Naive thymus-derived CD4-positive, alpha-beta T cell (primary cell): ENCODE measurements at regions of chr15 and their contacts with region 1.

Region 1: DNA sequence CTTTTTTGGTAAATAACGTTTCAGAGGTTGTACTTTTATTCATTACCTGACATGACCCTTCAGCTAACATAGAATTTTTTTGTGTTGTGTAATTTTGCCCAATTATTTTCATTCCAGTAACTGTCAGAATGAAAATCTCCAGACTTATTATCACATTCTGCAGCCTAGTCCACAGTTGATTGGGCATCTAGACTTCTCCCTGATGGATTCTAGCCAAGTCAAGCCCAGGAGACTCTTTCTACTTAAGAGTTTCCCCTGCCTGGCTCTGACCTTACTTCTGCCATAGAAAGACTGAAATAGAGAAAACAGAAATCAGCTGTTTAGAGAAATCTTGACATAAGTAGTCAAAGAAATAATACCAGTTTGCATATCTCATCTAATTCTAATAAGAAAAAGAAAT is 82.9 kb upstream of the CDAN1 start:
- DNase-seq: no peak
- ATAC-seq: no peak
- H3K4me3 ChIP-seq: no peak overlapping the region
- H3K4me3 Mint-ChIP-seq: no peak overlapping the region
- H3K27ac ChIP-seq: no peak overlapping the region
- H3K27ac Mint-ChIP-seq: no peak overlapping the region
- H3K4me1 ChIP-seq: no peaks in the 10 kb centered on the region
- H3K4me1 Mint-ChIP-seq: no peaks in the 10 kb centered on the region
- H3K27me3 ChIP-seq: no peaks in the 10 kb centered on the region
- H3K27me3 Mint-ChIP-seq: no peaks in the 10 kb centered on the region

Region 2: DNA sequence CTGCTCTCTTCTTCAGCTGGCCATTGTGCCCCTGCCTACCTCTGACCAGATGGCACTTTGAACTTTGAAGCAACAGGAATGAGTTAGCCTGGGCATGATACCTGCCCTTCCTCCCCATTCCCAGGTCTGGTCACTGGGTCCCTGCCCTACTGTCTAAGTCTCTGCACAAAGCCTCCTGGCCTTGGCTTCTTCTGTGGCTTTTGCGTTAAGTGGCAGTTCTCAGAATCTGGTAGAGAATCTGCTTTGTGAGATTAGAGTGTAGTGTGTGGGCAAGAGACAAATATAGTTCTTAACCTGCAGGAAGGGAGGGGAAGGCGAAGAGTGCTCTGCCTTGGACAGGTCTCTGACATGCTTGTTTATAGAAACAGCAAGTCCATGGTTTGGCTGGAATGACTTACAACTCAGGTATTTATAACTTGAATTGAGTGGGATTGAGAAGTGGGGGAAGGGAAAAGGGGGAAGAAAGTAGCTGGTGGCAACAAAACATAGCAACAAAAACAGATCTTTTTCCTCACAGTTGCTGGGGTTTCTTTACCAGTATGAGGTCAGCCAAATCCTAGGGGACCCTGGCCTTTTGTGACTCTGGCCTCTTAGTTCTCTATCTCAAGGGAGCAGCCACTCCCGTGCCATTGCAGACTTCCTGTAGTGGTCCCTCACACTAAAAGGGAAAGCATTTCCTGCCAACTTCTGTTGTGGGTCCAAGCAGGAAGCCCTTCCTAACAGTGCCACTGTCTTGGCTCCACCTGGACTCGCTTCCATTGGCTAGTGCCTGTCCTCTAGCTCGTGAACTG is 1028.8 kb before region 1 on chr15:
- CTCF ChIA-PET with region 1: no interaction called
- POLR2A ChIA-PET with region 1: no interaction called
- intact Hi-C with region 1: no loop called
- DNase-seq: no peak
- ATAC-seq: no peak
- H3K4me3 ChIP-seq: no peak overlapping the region
- H3K4me3 Mint-ChIP-seq: peak overlapping the region; percentile 2 to 70 (median 46)
- H3K27ac ChIP-seq: no peak overlapping the region
- H3K27ac Mint-ChIP-seq: peak overlapping the region in 7 of 9 donors; percentile 1 to 90 (median 53)
- H3K4me1 ChIP-seq: peaks cover 8 to 10% of the 10 kb centered on the region in 2 donors
- H3K4me1 Mint-ChIP-seq: peaks cover 50 to 72% (median 57%) of the 10 kb centered on the region in 7 donors
- H3K27me3 ChIP-seq: no peaks in the 10 kb centered on the region
- H3K27me3 Mint-ChIP-seq: no peaks in the 10 kb centered on the region

Region 3: DNA sequence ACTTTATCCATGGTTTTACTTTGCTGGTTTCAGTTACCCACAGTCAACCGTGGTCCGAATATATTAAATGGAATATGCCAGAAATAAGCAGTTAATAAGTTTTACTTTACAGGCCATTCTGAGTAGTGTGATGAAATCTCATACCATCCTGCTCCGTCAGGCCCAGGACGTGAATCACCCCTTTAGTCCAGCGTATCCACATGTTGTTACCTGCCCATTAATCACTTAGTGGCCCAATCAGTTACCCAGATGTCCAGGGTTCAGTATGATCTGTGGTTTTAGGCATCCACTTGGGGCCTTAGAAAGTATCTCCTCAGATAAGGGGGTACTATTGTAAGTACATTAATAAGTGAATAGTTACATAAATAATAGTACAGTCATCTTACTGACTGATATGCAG is 12.8 kb after region 1 on chr15:
- CTCF ChIA-PET with region 1: no interaction called
- POLR2A ChIA-PET with region 1: no interaction called
- intact Hi-C with region 1: loop called in 1 of 2 experiments (anchors 1 kb)
- DNase-seq: no peak
- ATAC-seq: no peak
- H3K4me3 ChIP-seq: no peak overlapping the region
- H3K4me3 Mint-ChIP-seq: no peak overlapping the region
- H3K27ac ChIP-seq: no peak overlapping the region
- H3K27ac Mint-ChIP-seq: no peak overlapping the region
- H3K4me1 ChIP-seq: no peaks in the 10 kb centered on the region
- H3K4me1 Mint-ChIP-seq: no peaks in the 10 kb centered on the region
- H3K27me3 ChIP-seq: no peaks in the 10 kb centered on the region
- H3K27me3 Mint-ChIP-seq: no peaks in the 10 kb centered on the region

Region 4: DNA sequence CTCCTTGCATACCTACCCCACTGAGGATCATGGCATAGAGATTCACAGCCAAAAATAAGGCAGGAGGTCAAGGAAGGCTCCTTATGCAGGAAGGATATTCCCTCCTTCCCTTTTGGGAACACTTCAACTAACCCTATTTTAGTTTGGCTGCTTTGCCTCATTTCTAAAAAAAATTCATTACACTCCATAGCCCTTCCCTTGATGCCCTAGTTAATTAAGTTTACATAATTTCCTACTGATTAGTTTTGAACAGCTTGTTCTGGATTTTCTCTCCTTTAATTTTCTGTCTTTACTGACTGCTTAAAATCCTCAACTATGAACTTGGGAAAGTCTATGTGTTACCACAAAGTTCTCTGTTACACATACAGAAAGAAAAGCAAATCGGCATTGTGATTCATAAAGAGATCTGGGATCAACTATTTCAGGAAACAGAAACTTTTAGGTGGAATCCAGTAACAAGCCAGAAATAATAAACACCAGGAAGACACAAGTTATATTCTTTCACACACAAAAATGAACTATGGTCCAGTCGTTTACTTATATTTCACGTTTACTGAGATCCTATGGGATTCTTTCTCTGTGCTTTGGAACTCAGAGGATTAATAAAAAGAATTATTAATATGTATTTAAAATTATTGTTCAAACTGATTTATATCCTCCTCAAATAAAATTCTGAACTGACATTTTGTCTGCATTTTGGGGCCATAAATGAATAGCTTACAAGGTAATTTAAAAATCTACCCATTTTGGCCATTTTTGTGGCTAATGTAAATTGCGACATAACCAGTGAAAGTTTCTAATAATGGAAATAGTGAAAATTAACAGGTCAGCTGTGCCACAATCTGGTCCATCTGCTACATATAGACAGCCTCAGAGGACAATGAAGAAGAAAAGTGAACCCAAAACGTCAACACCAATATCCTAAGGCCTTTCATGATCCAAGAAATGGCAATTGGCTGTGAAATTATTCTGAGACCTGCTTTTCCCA is 1261.5 kb after region 1 on chr15:
- CTCF ChIA-PET with region 1: no interaction called
- POLR2A ChIA-PET with region 1: no interaction called
- intact Hi-C with region 1: no loop called
- DNase-seq: no peak
- ATAC-seq: no peak
- H3K4me3 ChIP-seq: no peak overlapping the region
- H3K4me3 Mint-ChIP-seq: no peak overlapping the region
- H3K27ac ChIP-seq: no peak overlapping the region
- H3K27ac Mint-ChIP-seq: no peak overlapping the region
- H3K4me1 ChIP-seq: no peaks in the 10 kb centered on the region
- H3K4me1 Mint-ChIP-seq: no peaks in the 10 kb centered on the region
- H3K27me3 ChIP-seq: peaks cover 0 to 4% of the 10 kb centered on the region in 2 donors
- H3K27me3 Mint-ChIP-seq: peaks cover 24 to 56% (median 49%) of the 10 kb centered on the region in 5 donors